PC-3 (cell line): ENCODE measurements at regions of chr7 and their contacts with region 1.

Region 1: DNA sequence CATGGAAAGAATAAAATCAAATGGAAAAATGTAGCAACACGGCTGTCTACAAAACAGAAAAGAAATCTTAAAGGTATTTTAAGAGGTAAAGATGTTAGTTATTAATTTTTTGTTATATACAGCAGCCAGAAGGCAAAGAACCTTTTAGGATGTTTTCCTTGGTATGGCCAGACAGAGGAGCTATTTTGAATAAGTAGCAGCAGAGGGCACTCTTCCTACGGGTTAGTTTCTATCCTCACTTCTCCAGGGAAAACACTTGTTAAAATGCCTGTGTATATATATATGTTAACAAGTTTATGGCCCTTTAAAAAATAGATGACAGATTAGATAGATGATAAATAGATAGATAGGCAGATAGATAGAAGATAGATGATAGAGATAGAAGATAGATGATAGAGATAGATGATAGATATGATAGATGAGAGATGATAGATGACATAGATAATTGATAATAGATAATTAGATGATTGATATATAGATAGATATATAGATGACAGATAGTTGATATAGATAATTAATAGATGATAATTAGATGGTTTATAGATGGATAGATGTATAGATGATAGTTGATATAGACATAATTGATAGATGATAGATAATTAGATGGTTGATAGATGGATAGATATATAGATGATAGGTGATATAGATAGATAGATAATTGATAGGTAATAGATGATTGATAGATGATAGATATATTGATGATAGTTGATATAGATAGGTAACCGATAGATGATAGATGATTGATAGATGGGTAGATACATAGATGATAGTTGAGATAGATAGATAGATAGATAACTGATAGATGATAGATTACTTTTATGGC is 57.8 kb upstream of the WIPF3 start:
- DNase-seq: peak; percentile 73
- ATAC-seq: peak; percentile 66
- H3K4me3 ChIP-seq: 0 out of 2 replicates have a peak overlapping the region, but pooled peaks have one; percentile 27
- H3K27ac ChIP-seq: peak overlapping the region; percentile 37; the same call in 1 of the 2 replicates
- H3K4me1 ChIP-seq: peaks cover 9% of the 10 kb centered on the region
- H3K27me3 ChIP-seq: no peaks in the 10 kb centered on the region
- CTCF ChIP-seq: peak; percentile 73

Region 2: GRCh38 chr7:29684787-29685650 is 63.5 kb before region 1 on chr7:
- CTCF ChIA-PET with region 1: interaction called, 3 read pairs
- POLR2A ChIA-PET with region 1: no interaction called
- intact Hi-C with region 1: loop called (anchors 2 kb)
- DNase-seq: peak; percentile 77
- ATAC-seq: peak; percentile 87
- H3K4me3 ChIP-seq: peak overlapping the region; percentile 76
- H3K27ac ChIP-seq: peak overlapping the region; percentile 47; the same call in 1 of the 2 replicates
- H3K4me1 ChIP-seq: peaks cover 5% of the 10 kb centered on the region; the same call in 1 of the 2 replicates
- H3K27me3 ChIP-seq: no peaks in the 10 kb centered on the region
- CTCF ChIP-seq: no peak

Region 3: DNA sequence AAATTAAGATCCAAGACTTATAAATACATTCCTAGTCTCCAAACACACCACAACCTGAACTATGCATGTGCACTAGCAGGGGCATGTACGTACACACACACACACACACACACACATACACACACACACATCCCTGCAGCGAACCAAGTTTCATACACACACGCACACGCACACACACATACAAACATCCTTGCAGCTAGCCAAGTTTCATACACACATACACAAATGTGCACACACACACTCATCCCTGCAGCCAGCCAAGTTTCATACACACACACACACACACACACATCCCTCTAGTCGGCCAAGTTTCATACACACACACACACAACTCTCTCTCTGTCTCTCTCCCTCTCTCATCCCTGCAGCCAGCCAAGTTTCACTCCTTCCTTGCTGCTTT is 24.9 kb before region 1 on chr7:
- CTCF ChIA-PET with region 1: no interaction called
- POLR2A ChIA-PET with region 1: no interaction called
- intact Hi-C with region 1: loop called (anchors 1 kb)
- DNase-seq: peak; percentile 13
- ATAC-seq: peak; percentile 48
- H3K4me3 ChIP-seq: peak overlapping the region; percentile 44
- H3K27ac ChIP-seq: peak overlapping the region; percentile 57
- H3K4me1 ChIP-seq: peaks cover 21% of the 10 kb centered on the region
- H3K27me3 ChIP-seq: no peaks in the 10 kb centered on the region
- CTCF ChIP-seq: no peak

Region 4: DNA sequence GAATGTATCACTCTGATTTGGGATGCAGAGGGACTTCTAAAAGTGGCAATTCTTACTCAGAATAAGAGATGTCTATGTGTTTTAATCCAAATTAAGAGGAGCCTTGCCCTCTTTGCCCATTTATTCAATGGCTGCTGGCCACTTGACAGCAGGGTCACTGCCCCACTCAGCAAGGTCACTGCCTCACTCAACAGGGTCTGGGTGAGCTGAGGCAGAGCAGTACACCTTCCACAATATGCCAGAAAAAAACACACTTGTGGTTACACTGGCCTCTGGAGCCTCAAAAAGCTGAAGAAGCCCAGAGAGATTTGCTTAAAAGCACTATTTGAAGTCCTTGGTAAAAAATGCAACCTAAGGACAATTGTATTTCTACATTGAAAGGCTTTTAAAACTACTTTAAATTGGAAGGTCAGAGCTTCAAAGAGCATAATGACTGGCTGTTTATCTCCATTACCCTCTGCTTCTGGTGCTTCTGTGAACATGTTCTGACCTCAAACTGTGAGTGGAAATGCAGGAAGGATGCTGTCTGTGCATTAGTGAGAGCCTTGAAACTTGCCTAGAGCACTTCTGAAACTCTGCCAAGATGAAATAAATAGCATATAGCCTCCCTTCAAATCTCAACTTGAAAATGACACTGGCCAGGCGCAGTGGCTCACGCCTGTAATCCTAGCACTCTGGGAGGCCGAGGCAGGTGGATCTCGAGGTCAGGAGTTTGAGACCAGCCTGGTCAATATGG is 22.8 kb after region 1 on chr7:
- CTCF ChIA-PET with region 1: no interaction called
- POLR2A ChIA-PET with region 1: no interaction called
- intact Hi-C with region 1: no loop called
- DNase-seq: no peak
- ATAC-seq: no peak
- H3K4me3 ChIP-seq: no peak overlapping the region
- H3K27ac ChIP-seq: no peak overlapping the region
- H3K4me1 ChIP-seq: no peaks in the 10 kb centered on the region
- H3K27me3 ChIP-seq: peaks cover 3% of the 10 kb centered on the region; the same call in 1 of the 2 replicates
- CTCF ChIP-seq: no peak

Region 5: DNA sequence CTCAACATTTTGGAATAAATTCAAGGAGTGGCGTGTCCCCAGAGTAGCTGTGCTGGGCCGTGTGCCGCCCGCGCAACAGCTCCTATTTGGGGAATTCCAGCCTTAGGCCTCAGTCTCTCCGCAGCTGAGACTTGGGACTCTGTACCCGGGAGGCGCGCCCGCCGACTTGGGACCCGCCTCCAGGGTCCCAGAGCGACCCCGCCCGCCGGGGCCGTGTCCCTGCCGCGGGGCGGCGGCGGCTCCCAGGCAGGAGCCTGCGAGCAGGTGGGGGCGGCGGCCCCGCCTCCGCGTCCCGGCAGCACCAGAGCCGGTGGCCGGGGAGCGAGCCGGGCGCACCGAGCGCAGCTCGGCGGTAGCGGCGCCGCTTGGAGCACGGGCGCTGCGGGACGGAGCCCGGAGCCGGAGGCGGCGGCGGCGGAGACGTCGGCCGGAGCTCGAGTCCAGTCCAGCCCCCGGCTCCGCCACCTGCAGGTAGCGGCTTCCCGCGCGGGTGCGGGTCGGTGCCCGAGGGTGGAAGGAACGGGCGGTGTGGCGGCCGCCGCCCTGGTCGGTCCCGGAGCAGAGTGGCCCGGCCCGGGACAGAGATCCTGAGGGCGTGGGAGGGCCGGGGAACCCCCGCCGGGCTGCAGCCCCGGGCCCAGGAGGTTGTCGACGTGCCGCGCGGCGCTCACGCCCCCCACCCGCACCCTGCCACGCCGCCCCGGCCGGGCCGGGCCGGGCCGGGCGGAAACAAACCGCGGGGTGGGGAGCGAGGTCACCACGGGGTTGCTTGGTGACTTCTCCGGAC is 57.9 kb after region 1 on chr7 and contains the start of gene WIPF3:
- CTCF ChIA-PET with region 1: no interaction called
- POLR2A ChIA-PET with region 1: no interaction called
- intact Hi-C with region 1: loop called (anchors 5 kb)
- DNase-seq: peak; percentile 40
- ATAC-seq: peak; percentile 63
- H3K4me3 ChIP-seq: peak within 1 kb of the TSS; percentile 65
- H3K27ac ChIP-seq: no peak within 1 kb of the TSS
- H3K4me1 ChIP-seq: peaks cover 10% of the 10 kb centered on the region; the same call in 1 of the 2 replicates
- H3K27me3 ChIP-seq: peaks cover 4% of the 10 kb centered on the region; the same call in 1 of the 2 replicates
- CTCF ChIP-seq: no peak
- total RNA-seq, gene WIPF3: 3.3 and 3.4 TPM in 2 replicates

Region 6: GRCh38 chr7:29878081-29878688 is 129.7 kb after region 1 on chr7:
- CTCF ChIA-PET with region 1: interaction called, 4 read pairs
- POLR2A ChIA-PET with region 1: no interaction called
- intact Hi-C with region 1: loop called (anchors 2 kb)
- DNase-seq: peak; percentile 76
- ATAC-seq: peak; percentile 74
- H3K4me3 ChIP-seq: no peak overlapping the region
- H3K27ac ChIP-seq: no peak overlapping the region
- H3K4me1 ChIP-seq: peaks cover under 1% of the 10 kb centered on the region
- H3K27me3 ChIP-seq: no peaks in the 10 kb centered on the region
- CTCF ChIP-seq: peak; percentile 83

Region 7: GRCh38 chr7:29921404-29922010 is 173.0 kb after region 1 on chr7:
- CTCF ChIA-PET with region 1: interaction called, 10 read pairs
- POLR2A ChIA-PET with region 1: no interaction called
- intact Hi-C with region 1: loop called (anchors 1 kb)
- DNase-seq: peak; percentile 73
- ATAC-seq: peak; percentile 96
- H3K4me3 ChIP-seq: no peak overlapping the region
- H3K27ac ChIP-seq: no peak overlapping the region
- H3K4me1 ChIP-seq: no peaks in the 10 kb centered on the region
- H3K27me3 ChIP-seq: no peaks in the 10 kb centered on the region
- CTCF ChIP-seq: peak; percentile 95